ENCODE measurements at regions of chr17 and their contacts with region 1.

Region 1: DNA sequence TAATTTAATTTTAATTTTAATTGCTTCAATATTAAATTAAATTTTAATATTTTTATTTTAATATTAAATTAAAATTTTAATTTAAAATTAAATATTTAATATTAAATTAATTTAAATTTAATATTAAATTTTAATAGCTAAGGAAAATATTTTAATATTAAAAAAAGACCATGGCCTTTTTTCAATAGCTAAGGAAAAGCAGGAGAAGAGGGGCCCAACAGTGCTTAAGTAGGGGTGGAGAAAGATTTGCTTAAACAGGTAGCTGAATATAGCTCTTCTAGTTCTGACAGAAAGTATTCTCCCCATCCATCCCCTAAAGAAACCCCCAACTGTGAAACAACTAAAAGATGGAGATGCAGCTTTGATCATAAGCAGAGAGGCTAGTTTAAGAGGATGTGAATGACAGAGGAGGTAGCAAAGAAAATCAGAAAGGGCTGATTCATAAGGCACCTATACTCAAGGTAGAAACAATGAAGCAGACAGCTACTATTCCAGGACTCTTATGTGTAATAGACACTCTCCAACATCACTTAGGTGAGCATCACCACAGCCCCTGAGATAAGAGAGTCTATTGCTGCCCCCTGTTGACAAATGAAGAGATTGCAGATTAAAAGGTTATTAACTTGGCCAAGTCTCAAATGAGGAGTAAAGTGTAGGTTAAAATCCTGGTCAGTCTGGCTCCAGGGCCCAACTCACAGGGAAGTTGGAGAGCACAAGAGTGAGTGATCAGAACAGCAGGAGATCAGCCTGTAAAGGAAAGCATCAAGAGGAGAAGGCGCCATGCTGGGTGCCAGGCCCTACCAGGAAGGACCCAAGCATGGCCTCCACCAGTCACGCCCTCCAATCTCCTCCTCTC is 7.8 kb upstream of the RNASEK start:
- DNase-seq: no peak
- H3K4me3 Mint-ChIP-seq: no peak overlapping the region
- H3K27ac Mint-ChIP-seq: peak overlapping the region; percentile 49
- H3K4me1 Mint-ChIP-seq: peaks cover 22% of the 10 kb centered on the region
- H3K27me3 Mint-ChIP-seq: no peaks in the 10 kb centered on the region

Region 2: GRCh38 chr17:6666077-6666521 is 338.5 kb before region 1 on chr17:
- CTCF ChIA-PET with region 1: interaction called, 4 read pairs
- POLR2A ChIA-PET with region 1: no interaction called
- intact Hi-C with region 1: loop called (anchors 5 kb)
- DNase-seq: peak; percentile 65
- H3K4me3 Mint-ChIP-seq: no peak overlapping the region
- H3K27ac Mint-ChIP-seq: no peak overlapping the region
- H3K4me1 Mint-ChIP-seq: peaks cover 7% of the 10 kb centered on the region
- H3K27me3 Mint-ChIP-seq: no peaks in the 10 kb centered on the region

Region 3: DNA sequence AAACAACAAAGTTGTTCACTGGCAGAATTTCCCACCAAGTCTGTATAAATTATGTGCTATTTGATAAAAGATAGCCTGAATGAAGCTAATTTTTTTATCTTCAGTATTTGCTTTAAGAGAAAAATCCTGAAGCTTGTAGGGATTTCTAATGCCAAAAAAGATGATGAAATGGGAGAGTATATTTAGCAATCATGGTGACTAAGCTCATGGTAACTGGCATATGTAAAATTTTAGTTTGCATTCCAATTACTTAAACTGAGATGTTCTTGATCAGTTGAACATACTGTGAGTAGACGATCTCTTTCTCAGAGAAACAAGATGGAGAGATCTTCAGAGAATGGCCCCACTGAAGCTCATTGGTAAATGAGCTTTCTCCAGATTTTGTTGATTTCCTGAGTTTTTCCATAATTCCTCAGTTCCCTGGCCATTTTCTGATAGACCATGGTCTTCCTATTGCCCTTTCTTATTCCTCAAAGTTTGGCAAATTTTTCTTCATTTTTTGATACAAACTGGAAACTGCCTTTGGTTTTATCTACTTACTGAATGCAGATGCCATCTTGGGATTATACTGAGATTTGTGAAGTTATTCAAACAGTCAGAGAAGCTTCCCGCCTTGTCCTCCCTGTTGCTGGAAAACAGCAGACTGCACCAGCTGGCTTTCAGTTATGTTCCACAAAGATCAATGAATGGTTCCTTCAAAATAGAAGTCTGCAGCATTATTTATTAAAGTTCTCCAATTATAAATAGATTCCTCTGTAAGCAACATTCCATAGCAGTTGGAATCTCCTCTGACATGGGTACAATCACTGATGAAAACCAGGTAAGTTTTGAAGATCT is 77.1 kb before region 1 on chr17:
- CTCF ChIA-PET with region 1: interaction called, 11 read pairs
- POLR2A ChIA-PET with region 1: no interaction called
- intact Hi-C with region 1: no loop called
- DNase-seq: no peak
- H3K4me3 Mint-ChIP-seq: no peak overlapping the region
- H3K27ac Mint-ChIP-seq: no peak overlapping the region
- H3K4me1 Mint-ChIP-seq: peaks cover 13% of the 10 kb centered on the region
- H3K27me3 Mint-ChIP-seq: no peaks in the 10 kb centered on the region

Region 4: DNA sequence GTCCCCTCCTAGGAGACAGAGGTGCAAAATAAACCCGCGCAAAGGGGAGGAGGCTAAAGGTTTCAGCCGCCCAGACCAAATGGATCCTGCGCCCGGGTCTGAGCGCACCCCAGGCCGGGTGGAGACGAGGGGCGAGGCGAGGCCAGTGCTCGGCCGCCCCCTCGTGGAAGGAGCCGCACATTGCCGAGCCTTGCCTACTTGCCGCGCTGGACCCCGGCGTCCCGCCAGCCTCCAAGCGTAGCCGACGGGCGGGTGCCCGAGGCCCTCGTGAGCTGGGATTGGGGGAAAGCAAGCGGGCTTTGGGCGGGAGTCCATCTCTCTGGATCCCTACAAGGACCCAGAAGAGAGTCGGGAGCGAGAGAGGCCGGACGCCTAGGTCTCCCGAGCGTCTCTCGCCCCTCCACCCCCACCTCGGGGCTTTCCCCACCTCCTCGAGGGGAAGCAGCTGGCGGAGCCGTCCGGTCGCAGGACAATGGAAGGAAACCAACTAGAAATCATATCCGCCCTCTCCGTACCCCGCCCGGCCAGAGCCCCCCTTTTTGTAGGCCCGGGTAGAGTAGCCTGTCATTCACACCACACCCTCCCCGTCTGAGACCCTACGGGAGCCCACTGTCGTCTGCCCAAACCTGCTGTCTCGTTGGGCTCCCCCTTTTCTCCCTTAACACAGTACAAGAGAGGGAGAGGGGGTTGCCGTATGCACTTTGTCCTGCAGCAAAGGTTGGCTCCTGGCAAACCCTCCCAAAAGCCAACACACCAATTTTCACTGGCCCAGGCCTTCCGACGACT is 17.6 kb after region 1 on chr17:
- CTCF ChIA-PET with region 1: interaction called, 63 read pairs
- POLR2A ChIA-PET with region 1: no interaction called
- intact Hi-C with region 1: no loop called
- DNase-seq: peak; percentile 87
- H3K4me3 Mint-ChIP-seq: peak overlapping the region; percentile 61
- H3K27ac Mint-ChIP-seq: peak overlapping the region; percentile 45
- H3K4me1 Mint-ChIP-seq: peaks cover 38% of the 10 kb centered on the region
- H3K27me3 Mint-ChIP-seq: peaks cover 2% of the 10 kb centered on the region

Region 5: GRCh38 chr17:7234083-7234951 is 229.7 kb after region 1 on chr17 and contains the start of gene DVL2:
- CTCF ChIA-PET with region 1: no interaction called
- POLR2A ChIA-PET with region 1: no interaction called
- intact Hi-C with region 1: no loop called
- DNase-seq: peak; percentile 96
- H3K4me3 Mint-ChIP-seq: peak within 1 kb of the TSS; percentile 97
- H3K27ac Mint-ChIP-seq: peak within 1 kb of the TSS; percentile 90
- H3K4me1 Mint-ChIP-seq: peaks cover 48% of the 10 kb centered on the region
- H3K27me3 Mint-ChIP-seq: peaks cover 2% of the 10 kb centered on the region
- total RNA-seq, gene DVL2: 44.7 to 48.2 TPM

Measured in activated CD4-positive, alpha-beta memory T cell treated with anti-CD3 and anti-CD28 coated beads for 36 hours (primary cell).